Astrocyte of the cerebellum (primary cell): ENCODE measurements at regions of chr9 and their contacts with region 1.

Region 1: DNA sequence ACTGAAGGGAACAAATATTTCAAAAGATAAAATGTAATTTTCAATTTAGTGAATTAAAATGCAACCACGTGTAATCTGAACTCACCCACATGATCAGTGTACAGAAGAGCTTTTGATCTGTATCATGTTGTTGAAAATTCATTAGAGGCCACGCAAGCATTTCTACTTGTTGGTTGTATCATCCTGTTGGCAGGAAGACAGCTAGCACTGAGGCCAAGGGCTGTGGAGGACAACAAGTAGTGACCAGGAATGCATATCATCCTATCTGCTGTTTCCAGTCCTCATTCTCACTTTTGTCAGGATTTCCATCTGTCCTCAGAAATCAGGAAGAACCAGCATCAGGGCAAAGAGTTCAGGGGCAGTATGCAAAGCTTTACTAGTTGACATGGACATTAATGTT is 29.9 kb upstream of the CKS2 start:
- DNase-seq: no peak
- H3K4me3 ChIP-seq: no peak overlapping the region
- CTCF ChIP-seq: no peak

Region 2: GRCh38 chr9:88932766-88933165 is 348.3 kb before region 1 on chr9:
- in situ Hi-C with region 1: no loop called
- DNase-seq: no peak
- H3K4me3 ChIP-seq: no peak overlapping the region
- CTCF ChIP-seq: no peak

Region 3: GRCh38 chr9:89179895-89180667 is 101.0 kb before region 1 on chr9:
- in situ Hi-C with region 1: loop called (anchors 5 kb)
- DNase-seq: peak; percentile 95
- H3K4me3 ChIP-seq: peak overlapping the region; percentile 38
- CTCF ChIP-seq: no peak

Region 4: DNA sequence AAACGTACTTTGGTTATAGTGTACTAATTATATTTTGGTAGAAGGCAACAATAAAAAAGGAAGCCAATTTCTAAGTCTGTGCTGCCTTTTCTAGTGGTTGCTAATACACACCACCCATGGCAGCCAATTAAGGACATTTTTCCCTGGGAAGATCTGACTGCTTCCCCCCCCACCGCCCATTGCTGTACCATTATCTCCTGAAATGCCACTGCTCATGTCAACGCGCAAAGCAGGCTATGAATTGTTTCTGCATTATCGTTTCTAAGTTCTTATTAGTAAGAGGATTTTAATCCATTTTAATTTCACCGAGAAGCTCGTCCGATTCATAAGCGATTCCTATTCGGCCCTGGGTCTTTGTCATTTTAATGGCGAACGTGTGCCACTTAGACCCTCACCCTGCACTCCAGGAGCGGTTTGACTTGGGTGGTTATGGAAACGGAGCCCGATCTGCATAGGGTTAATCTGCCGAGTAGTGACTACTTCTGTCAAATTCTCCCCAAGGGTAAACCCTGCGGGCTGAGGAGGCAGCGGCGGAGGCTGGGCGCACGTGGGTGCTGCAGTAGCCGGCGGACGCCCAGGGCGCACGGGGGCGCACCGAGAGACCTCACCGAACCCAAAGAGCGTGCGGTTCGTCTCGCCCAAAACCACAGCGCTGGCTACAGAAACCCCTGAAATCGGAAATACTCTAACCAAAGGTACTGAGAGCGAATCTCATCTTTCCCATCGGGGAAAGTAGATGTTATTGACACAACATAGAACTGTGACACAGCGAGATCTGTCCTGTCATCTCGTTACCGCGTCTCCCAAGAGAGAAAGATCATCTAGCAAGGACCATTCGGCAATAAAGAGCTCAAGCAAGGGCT is 46.7 kb before region 1 on chr9:
- in situ Hi-C with region 1: loop called (anchors 5 kb)
- DNase-seq: no peak
- H3K4me3 ChIP-seq: peak overlapping the region; percentile 35
- CTCF ChIP-seq: peak; percentile 25

Region 5: GRCh38 chr9:89247431-89248353 is 33.4 kb before region 1 on chr9:
- in situ Hi-C with region 1: no loop called
- DNase-seq: no peak
- H3K4me3 ChIP-seq: no peak overlapping the region
- CTCF ChIP-seq: no peak

Region 6: DNA sequence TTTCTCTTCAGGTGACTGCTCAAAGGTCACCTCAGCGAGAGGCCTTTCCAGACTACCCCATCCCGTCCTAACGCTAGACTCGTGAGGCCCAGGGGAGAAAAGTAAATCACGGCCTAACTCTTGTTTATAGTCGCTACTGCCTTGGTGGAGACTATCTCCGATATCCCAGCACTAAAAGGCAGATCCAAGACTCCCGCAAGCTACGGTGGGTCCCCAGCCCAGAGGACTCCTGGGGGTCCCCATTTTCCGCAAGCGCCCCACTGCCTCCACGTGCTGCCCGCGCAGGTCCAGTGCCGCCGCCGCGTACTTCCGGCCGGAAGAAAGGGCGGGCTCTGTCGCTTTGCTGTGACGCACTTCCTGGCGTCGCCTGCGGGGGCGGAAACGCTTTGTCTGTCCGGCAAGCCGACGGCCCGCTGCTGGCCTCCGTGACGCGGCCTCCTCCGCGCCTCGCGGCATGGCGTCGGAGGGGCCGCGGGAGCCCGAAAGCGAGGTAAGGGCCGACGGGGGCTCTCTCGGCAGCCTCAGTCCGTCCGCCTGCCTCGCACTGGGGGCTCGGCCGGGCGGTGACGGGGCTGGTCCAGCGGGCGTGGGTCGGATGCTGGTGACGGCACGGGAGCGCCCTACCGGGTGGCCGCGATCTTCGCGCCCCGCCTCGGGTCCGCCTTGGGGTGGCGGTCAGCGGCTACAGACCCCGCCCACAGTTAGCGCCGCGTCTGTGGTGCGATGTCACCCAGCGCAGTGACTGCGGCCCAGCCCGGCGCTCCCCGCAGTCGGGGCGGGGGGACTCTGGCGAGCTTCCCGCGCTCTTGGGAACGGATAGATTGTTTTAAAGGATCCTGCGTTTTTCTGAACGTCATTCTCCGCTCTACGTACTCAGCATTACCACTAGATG is 37.3 kb after region 1 on chr9 and contains the start of gene SECISBP2:
- in situ Hi-C with region 1: no loop called
- DNase-seq: peak; percentile 95
- H3K4me3 ChIP-seq: peak within 1 kb of the TSS; percentile 68
- CTCF ChIP-seq: peak; percentile 76